MCF 10A (cell line): ENCODE measurements at regions of chr18 and their contacts with region 1.

Region 1: DNA sequence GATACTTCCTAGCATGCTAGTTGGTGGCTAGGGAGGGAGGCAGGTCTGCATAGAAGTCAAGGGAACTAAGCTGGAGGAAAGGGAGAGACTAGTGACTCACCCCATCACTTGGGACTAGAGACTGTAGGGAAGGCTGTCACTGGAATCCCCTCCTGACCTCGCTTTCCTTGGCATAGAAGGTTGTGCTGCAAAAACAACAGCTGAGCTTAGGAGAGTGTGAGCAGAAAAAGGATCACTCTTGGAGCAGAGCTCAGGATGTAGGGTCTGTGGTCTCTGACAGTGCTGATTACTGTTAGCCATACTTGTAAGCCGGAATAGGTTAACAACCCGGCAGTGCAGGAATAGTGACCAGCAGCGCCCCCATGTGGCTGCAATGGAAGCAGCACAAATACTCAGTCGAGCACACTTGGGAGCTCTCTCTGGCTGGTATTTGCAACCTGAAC is 66.9 kb upstream of the SMAD2 start:
- DNase-seq: peak; percentile 28
- H3K4me3 Mint-ChIP-seq: no peak overlapping the region
- H3K27ac Mint-ChIP-seq: no peak overlapping the region
- H3K4me1 Mint-ChIP-seq: peaks cover 1% of the 10 kb centered on the region
- H3K27me3 Mint-ChIP-seq: no peaks in the 10 kb centered on the region
- CTCF ChIP-seq: peak; percentile 52

Region 2: DNA sequence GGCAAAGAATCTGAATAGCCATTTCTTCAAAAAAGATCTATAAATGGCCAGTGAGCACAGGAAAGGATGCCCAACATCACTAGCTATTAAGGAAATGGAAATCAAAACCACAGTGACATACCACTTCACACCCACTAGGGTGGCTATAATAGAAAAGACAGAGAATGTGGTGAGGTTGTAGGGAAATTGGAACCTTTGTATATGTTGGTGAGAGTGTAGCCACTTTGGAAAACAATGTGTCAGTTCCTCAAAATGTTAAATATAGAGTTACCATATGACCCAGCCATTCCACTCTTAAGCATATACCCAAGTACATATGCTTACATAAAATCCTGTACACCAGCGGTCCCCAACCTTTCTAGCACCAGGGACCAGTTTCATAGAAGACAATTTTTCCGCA is 219.7 kb before region 1 on chr18:
- CTCF ChIA-PET with region 1: no interaction called
- POLR2A ChIA-PET with region 1: no interaction called
- intact Hi-C with region 1: no loop called
- DNase-seq: no peak
- H3K4me3 Mint-ChIP-seq: no peak overlapping the region
- H3K27ac Mint-ChIP-seq: no peak overlapping the region
- H3K4me1 Mint-ChIP-seq: peaks cover 5% of the 10 kb centered on the region
- H3K27me3 Mint-ChIP-seq: peaks cover 32% of the 10 kb centered on the region
- CTCF ChIP-seq: no peak

Region 3: DNA sequence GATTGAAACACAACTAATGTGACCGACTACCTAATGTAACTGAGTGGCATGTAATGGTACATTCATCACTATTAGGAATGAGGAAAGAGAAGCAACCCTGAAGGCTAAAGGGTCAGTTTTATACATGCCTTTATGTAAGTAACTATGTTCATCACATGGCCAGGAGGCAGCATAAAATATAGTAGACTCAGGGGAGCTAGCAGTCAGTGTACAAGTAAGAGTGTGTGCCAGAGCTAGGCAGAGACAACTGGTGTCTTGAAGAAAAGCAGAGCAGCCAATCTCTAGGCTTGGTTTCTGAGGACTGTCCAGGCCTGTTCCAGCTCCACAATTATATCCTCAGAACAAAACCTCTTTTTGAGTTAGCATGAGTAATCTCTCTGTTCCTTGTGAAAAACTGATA is 85.0 kb before region 1 on chr18:
- CTCF ChIA-PET with region 1: no interaction called
- POLR2A ChIA-PET with region 1: no interaction called
- intact Hi-C with region 1: no loop called
- DNase-seq: no peak
- H3K4me3 Mint-ChIP-seq: no peak overlapping the region
- H3K27ac Mint-ChIP-seq: no peak overlapping the region
- H3K4me1 Mint-ChIP-seq: peaks cover 39% of the 10 kb centered on the region
- H3K27me3 Mint-ChIP-seq: no peaks in the 10 kb centered on the region
- CTCF ChIP-seq: no peak

Region 4: DNA sequence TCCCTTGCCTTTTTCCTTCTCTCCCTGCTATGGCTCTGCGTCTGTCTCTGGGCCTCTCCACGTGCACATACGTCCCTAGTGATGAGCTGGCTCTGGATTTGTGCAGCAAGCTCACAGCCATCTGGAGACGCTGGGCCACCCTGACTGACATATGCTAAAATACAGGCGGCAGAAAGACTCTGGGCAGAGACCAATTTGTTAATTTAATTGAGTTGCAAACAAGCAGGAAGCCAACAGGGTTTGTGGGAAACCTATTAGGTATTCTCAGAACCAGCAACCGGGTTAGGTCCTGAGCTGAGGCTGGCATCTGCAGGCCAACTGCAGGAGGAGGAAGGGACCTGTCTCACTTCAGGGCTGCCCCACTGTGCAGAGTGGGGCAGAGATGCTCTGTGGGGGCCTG is 13.4 kb before region 1 on chr18:
- CTCF ChIA-PET with region 1: interaction called, 10 read pairs
- POLR2A ChIA-PET with region 1: interaction called, 3 read pairs
- intact Hi-C with region 1: no loop called
- DNase-seq: no peak
- H3K4me3 Mint-ChIP-seq: no peak overlapping the region
- H3K27ac Mint-ChIP-seq: no peak overlapping the region
- H3K4me1 Mint-ChIP-seq: peaks cover 6% of the 10 kb centered on the region
- H3K27me3 Mint-ChIP-seq: no peaks in the 10 kb centered on the region
- CTCF ChIP-seq: no peak

Region 5: DNA sequence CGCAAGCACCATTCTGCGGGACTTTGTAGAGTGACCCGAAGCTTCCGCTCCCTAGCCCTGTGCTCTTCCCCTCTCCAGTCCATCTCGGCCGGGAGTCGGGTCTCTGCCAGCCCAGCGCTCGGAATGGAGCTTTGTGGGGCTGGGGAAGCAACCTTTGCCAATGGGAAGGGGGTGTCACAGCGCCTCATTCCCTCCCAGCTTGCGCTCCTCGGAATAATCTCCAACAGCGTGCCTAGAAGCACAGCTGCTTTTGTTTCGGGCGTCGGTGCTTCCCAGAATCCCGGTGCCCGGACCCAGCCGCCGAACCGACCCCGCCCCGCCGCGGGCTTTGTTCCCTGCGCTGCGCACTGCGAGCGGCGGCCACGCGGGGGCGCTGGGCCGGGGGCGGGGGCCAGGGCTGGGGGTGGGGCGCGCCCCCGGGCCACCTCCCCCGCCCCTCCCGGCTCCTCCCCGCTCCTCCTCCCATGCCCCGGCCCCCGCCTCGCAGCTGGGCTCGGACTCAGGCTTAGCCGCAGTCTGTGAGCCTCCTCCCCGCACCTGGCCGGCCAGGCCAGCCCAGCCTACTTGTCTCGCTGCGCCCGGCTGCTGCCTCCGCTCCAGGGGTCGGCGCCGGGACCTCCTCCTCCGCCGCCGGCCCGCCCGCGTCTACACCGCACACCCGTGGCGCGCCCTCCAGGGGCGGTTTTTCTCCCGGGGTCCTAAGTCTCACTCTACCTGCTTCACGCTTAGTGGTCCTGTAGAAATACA is 10.8 kb after region 1 on chr18:
- CTCF ChIA-PET with region 1: interaction called, 37 read pairs
- POLR2A ChIA-PET with region 1: no interaction called
- intact Hi-C with region 1: no loop called
- DNase-seq: peak; percentile 72
- H3K4me3 Mint-ChIP-seq: peak overlapping the region; percentile 71
- H3K27ac Mint-ChIP-seq: no peak overlapping the region
- H3K4me1 Mint-ChIP-seq: peaks cover 12% of the 10 kb centered on the region
- H3K27me3 Mint-ChIP-seq: peaks cover 13% of the 10 kb centered on the region
- CTCF ChIP-seq: peak; percentile 70